Ascending aorta (tissue), 2 donors: ENCODE measurements at regions of chr17 and their contacts with region 1.

Region 1: GRCh38 chr17:29180034-29180787 is at the start of gene MYO18A:
- DNase-seq: peak in 1 of 2 donors; percentile 87
- H3K4me3 ChIP-seq: peak within 1 kb of the TSS; percentile 57 to 82
- H3K27ac ChIP-seq: peak within 1 kb of the TSS; percentile 79 to 93
- H3K4me1 ChIP-seq: peaks cover 12 to 30% of the 10 kb centered on the region in 2 donors
- H3K27me3 ChIP-seq: no peaks in the 10 kb centered on the region
- CTCF ChIP-seq: peak; percentile 80 to 98 (median 88)
- total RNA-seq, gene MYO18A: 185 TPM

Region 2: GRCh38 chr17:29155227-29155965 is 24.8 kb before region 1 on chr17:
- intact Hi-C with region 1: no loop called
- DNase-seq: peak in 1 of 2 donors; percentile 80
- H3K4me3 ChIP-seq: peak overlapping the region in 1 of 2 donors; percentile 11
- H3K27ac ChIP-seq: peak overlapping the region; percentile 57 to 70
- H3K4me1 ChIP-seq: peaks cover 12 to 34% of the 10 kb centered on the region in 2 donors
- H3K27me3 ChIP-seq: no peaks in the 10 kb centered on the region
- CTCF ChIP-seq: no peak

Region 3: DNA sequence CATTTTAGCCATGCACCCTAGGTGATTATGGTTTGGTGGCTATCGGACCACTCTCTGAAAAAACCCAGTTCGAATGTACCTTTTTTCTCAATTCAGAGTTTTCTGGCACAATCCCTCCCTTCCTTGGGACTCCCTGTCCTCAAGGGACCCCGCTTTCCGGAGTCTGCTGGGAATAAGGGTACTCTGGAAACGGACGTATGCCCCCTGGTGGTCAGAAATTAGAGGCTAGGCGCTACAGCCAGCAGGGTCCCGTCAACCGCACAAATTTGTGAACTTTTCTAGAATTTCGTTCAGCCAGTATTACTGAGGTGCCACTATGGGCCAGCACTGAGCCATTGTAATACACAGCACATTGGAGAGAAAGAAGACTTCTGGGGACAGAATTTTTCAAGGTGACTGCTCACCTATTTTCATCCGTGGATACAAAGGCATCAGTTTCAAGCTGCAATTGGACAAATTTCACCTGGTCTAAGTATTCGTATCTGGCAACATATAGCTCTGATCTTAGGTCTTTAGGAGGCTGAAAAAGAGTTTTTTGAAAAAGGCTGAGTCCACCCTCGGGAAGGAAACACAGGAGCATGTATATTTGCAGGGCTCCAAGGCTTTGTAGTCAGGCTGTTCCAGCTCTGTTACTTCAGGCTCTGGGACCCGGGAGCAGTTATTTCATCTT is 39.3 kb after region 1 on chr17:
- intact Hi-C with region 1: loop called (anchors 1 kb)
- DNase-seq: peak in 1 of 2 donors; percentile 89
- H3K4me3 ChIP-seq: no peak overlapping the region
- H3K27ac ChIP-seq: no peak overlapping the region
- H3K4me1 ChIP-seq: peaks cover 3 to 10% of the 10 kb centered on the region in 2 donors
- H3K27me3 ChIP-seq: no peaks in the 10 kb centered on the region
- CTCF ChIP-seq: peak; percentile 89 to 98 (median 97)